AG04449 (cell line): ENCODE measurements at regions of chr2 and their contacts with region 1.

Region 1: GRCh38 chr2:102355526-102356380 is at the start of gene IL18R1:
- DNase-seq: no peak
- H3K4me3 ChIP-seq: peak within 1 kb of the TSS; percentile 68
- CTCF ChIP-seq: peak; percentile 94

Region 2: DNA sequence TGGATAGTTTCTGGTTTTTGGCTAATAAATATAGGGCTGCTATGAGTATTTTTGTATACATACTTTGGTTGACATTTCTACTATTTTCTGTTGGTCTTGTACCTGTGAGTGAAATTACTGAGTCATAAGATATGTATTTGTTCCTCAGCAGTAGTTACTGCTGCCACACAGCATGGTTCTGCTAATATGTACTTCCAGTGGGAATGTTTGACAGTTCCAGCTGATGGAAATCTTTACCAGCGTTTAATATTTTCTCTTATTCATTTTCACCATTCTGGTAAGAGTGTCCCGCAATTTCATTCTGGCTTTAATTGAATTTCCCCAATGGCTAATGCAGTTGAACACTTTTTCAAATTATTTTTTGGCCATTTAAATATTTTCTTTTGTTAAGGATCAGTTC is 271.1 kb before region 1 on chr2:
- CTCF ChIA-PET with region 1: no interaction called
- POLR2A ChIA-PET with region 1: no interaction called
- DNase-seq: no peak
- H3K4me3 ChIP-seq: no peak overlapping the region
- CTCF ChIP-seq: no peak

Region 3: GRCh38 chr2:102206666-102207341 is 148.9 kb before region 1 on chr2:
- CTCF ChIA-PET with region 1: no interaction called
- POLR2A ChIA-PET with region 1: no interaction called
- DNase-seq: no peak
- H3K4me3 ChIP-seq: no peak overlapping the region
- CTCF ChIP-seq: no peak

Region 4: GRCh38 chr2:102224824-102225739 is 130.7 kb before region 1 on chr2:
- CTCF ChIA-PET with region 1: no interaction called
- POLR2A ChIA-PET with region 1: no interaction called
- DNase-seq: no peak
- H3K4me3 ChIP-seq: no peak overlapping the region
- CTCF ChIP-seq: no peak

Region 5: GRCh38 chr2:102235491-102235890 is 120.3 kb before region 1 on chr2:
- CTCF ChIA-PET with region 1: interaction called, 51 read pairs
- POLR2A ChIA-PET with region 1: no interaction called
- DNase-seq: no peak
- H3K4me3 ChIP-seq: no peak overlapping the region
- CTCF ChIP-seq: peak; percentile 38

Region 6: DNA sequence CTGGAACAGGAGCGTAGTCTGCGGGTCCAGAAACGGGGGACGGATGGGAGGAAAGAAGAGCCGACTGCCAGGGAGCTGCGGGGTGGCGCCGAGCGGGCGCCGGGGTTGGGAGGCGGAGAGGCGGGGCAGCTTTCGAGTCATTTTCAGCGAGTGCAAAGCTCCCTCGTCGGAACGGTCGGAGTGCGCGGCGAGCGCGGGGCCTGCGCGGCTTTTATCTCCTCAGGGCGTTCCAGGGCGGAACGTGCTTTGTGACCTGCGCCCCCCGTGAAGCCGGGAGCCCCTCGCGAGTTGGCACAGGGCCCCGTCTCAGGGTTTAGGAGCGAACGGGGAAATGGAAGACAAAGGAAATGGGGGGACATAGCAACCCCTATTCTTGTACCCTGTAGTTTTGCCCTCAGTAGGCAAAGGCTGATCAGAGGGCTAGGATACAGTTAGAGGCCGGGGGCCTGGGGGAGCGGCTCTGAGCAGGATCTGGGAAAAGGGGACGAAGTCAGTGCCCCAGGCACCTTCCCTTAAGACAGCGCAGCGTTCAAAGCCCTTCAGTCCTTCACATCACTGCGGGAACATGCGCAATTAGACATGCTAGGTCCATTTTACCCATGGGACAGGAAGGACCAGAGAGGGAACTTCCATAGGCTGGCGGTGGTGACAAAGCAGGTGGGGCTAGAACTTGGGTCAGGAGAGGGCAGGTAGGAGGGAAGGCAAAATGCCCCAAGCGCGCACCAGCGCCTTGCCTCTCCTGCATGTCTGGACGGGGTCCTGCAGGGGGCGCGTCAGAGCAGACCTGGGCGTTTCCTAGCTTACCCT is 104.5 kb before region 1 on chr2:
- CTCF ChIA-PET with region 1: interaction called, 15 read pairs
- POLR2A ChIA-PET with region 1: no interaction called
- DNase-seq: no peak
- H3K4me3 ChIP-seq: peak overlapping the region; percentile 52
- CTCF ChIP-seq: peak; percentile 58

Region 7: GRCh38 chr2:102336502-102336945 is 19.2 kb before region 1 on chr2:
- CTCF ChIA-PET with region 1: interaction called, 10 read pairs
- POLR2A ChIA-PET with region 1: no interaction called
- DNase-seq: no peak
- H3K4me3 ChIP-seq: no peak overlapping the region
- CTCF ChIP-seq: no peak

Region 8: GRCh38 chr2:102418421-102418961 is 62.7 kb after region 1 on chr2:
- CTCF ChIA-PET with region 1: no interaction called
- POLR2A ChIA-PET with region 1: no interaction called
- DNase-seq: no peak
- H3K4me3 ChIP-seq: no peak overlapping the region
- CTCF ChIP-seq: no peak